ENCODE measurements at regions of chr10 and their contacts with region 1.

Region 1: DNA sequence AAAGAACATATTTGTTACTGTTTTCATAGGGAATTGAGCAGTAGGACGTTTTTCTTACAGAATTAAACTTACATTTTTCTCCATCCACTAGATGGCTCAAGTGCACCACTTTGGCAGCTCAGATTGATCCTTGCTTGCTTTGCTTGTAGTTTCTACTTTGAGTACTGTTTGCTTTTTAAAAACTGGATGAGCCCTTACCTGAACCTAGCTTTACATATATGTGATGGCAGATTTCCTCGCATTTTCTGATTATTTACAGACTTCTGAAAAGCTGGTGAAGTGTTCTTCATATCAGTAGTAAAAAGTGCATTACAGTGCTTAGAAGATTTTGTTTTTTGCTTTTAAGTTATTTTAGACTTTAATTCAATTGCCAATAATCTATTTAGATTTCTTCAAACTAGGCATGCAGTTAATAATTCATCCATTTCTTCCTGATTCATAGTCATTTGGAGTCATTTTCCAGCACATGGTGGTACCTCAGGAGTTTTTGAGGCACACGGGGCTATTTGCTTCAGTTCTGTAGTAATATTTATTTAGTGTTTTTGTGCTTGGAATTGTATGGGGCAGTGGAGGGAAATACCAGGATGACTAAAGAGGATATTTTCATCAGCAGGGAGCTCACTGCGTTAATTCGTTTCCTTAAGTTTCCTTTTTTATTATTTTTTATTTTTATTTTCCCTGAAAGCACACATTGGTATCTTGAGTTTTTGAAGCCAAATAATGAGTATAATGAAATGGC is 57.3 kb downstream of the MAPK8 start:
- DNase-seq: no peak
- ATAC-seq: no peak
- H3K4me3 ChIP-seq: no peak overlapping the region
- H3K27ac ChIP-seq: no peak overlapping the region
- H3K4me1 ChIP-seq: peaks cover 0 to 1% of the 10 kb centered on the region in 2 donors
- H3K27me3 ChIP-seq: no peaks in the 10 kb centered on the region

Region 2: DNA sequence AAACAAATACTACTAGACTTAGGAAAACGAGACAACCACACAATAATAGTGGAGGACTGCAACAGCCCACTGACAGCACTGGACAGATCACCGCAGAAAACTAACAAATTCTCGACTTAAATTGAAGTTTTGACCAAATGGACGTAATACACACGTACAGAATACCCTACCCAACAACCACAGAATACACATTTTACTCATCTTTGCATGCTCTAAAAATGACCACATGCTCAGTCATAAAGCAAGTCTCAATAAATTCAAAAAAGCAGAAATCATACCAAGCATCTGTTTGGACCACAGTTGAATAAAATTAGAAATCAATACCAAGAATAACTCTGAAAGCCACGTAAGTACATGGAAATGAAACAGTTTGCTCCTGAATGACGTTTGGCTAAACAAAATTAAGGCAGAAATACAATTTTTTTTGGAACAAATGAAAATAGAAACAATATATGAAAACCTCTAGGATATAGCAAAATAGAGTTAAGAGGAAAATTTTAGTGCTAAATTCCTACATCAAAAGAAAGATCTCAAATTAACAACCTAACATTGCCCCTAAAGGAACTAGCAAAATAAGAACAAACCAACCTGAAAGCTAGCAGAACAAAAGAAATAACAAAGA is 26.7 kb before region 1 on chr10:
- intact Hi-C with region 1: no loop called
- DNase-seq: no peak
- ATAC-seq: no peak
- H3K4me3 ChIP-seq: no peak overlapping the region
- H3K27ac ChIP-seq: no peak overlapping the region
- H3K4me1 ChIP-seq: no peaks in the 10 kb centered on the region
- H3K27me3 ChIP-seq: no peaks in the 10 kb centered on the region

Region 3: DNA sequence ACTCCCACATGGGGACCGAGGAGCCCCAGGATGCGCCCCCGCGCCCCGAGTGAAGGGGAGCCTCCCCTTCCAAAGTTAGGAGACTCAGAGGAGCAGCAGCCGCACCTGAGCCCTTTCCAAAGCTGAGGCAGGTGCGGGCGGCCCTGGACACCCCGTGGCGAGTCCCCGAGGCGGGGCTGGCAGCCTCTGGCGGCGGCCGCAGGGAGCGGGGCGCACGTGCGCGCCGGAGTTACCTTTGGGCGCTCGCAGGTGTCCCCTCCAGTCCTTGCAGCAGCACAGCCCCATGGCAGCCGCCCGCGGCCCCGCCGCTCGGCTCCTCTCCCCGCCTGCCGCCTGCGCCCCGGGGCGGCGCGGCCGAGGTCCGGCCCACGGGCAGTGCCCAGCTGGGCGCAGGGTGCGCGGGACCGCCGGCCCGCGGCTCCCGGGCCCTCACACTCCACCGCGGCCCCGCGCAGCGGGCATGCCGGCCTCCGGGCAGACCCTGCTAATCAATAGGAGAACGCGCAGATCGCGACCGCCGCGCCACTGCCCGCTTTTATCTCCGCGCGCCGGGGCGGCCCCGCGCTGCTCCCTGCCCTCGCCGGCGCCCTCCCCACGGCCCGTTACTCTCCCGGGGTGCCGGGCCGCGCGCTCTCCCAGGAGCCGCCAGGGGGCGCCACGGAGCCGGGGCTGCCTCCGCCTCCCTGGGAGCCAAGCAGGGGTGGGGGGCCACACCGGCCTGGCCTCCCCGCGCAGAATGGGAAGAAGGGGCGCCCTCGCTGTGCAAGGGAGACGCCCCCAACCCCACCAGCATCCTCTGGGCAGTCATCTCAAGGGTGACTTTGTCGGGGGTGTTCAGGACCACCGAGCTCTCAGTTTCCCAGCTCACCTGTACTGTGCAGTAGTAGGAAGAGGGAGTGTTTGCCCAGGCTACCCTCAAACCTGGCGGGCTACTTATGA is 160.3 kb after region 1 on chr10:
- intact Hi-C with region 1: loop called in 1 of 2 experiments (anchors 10 kb)
- DNase-seq: peak in 1 of 2 donors; percentile 47
- ATAC-seq: no peak
- H3K4me3 ChIP-seq: peak overlapping the region; percentile 51 to 65
- H3K27ac ChIP-seq: peak overlapping the region in 1 of 2 donors; percentile 47
- H3K4me1 ChIP-seq: no peaks in the 10 kb centered on the region
- H3K27me3 ChIP-seq: no peaks in the 10 kb centered on the region

Region 4: DNA sequence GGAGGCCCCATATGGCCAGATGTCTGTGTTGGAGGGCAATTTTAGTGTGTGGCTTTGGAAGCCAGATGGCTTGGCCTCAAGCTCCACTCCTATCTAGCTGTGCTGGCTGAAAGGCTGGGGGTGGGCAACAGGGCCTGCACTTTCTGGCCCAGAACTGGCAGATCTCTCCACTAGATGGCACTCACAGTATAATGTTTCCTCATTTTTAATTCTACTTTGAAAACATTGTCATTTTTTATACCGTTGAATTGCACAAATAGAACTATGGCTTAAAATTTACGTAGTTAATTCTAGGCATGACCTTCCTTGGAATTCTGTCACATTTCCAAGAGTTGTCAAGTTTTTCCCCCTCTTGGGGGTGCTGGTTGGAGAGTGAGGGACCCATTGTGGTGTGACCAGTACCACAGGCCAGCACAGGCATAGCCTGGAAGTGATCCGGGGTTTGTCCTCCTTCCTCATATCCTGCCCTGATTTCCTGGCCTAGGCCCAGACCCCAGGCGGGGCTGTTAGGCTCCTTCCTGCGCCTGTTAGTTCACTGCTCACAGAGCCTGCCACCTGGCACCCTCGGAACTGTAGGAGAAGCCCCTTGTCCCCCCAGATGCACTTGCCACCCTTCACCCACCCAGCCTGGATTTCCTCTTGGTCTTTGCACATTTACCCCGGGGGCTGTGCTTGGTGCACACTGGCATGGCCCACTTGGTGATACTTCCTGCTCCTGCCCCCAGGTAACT is 188.2 kb after region 1 on chr10:
- intact Hi-C with region 1: loop called (anchors 5 to 10 kb)
- DNase-seq: peak in 1 of 2 donors; percentile 58
- ATAC-seq: no peak
- H3K4me3 ChIP-seq: no peak overlapping the region
- H3K27ac ChIP-seq: no peak overlapping the region
- H3K4me1 ChIP-seq: no peaks in the 10 kb centered on the region
- H3K27me3 ChIP-seq: no peaks in the 10 kb centered on the region

Region 5: GRCh38 chr10:48656241-48656913 is 292.6 kb after region 1 on chr10:
- intact Hi-C with region 1: loop called (anchors 1 to 5 kb)
- DNase-seq: peak; percentile 95 to 98
- ATAC-seq: peak; percentile 98
- H3K4me3 ChIP-seq: peak overlapping the region; percentile 16 to 54
- H3K27ac ChIP-seq: no peak overlapping the region
- H3K4me1 ChIP-seq: no peaks in the 10 kb centered on the region
- H3K27me3 ChIP-seq: no peaks in the 10 kb centered on the region